ENCODE measurements at regions of chr15 and their contacts with region 1.

Region 1: GRCh38 chr15:89429023-89429422 is 67.4 kb downstream of the RHCG start:
- DNase-seq: no peak
- ATAC-seq: no peak
- H3K4me3 ChIP-seq: no peak overlapping the region
- H3K27ac ChIP-seq: no peak overlapping the region
- H3K4me1 ChIP-seq: peaks cover 0 to 6% (median 6%) of the 10 kb centered on the region in 3 donors
- H3K27me3 ChIP-seq: no peaks in the 10 kb centered on the region
- CTCF ChIP-seq: no peak

Region 2: DNA sequence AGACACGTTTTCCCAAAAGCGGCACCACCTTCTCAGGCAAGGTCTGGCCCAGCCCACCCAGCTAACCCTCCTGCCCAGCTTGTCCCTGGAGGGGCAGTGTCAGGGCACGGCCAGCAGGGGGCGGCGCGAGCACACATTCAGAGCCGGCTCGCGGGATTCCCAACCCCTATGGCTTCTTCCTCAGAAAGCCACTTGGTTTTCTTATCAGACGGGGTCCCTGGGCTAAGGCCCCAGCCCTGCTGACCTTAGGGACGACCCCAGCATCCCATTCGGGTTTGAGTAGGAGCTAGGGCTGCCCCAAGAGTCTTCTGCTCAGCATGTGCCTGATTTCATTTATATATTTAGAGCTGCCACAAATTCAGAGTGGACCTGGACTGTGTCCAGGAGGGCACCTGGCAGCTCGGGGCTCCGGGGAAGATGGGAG is 222.1 kb before region 1 on chr15:
- intact Hi-C with region 1: loop called in 1 of 3 experiments (anchors 10 kb)
- DNase-seq: peak; percentile 51 to 90 (median 78)
- ATAC-seq: peak; percentile 61 to 92 (median 90)
- H3K4me3 ChIP-seq: peak overlapping the region in 2 of 4 donors; percentile 18 to 37
- H3K27ac ChIP-seq: no peak overlapping the region
- H3K4me1 ChIP-seq: peaks cover 0 to 5% (median 5%) of the 10 kb centered on the region in 3 donors
- H3K27me3 ChIP-seq: no peaks in the 10 kb centered on the region
- CTCF ChIP-seq: peak; percentile 95 to 99 (median 96)

Region 3: DNA sequence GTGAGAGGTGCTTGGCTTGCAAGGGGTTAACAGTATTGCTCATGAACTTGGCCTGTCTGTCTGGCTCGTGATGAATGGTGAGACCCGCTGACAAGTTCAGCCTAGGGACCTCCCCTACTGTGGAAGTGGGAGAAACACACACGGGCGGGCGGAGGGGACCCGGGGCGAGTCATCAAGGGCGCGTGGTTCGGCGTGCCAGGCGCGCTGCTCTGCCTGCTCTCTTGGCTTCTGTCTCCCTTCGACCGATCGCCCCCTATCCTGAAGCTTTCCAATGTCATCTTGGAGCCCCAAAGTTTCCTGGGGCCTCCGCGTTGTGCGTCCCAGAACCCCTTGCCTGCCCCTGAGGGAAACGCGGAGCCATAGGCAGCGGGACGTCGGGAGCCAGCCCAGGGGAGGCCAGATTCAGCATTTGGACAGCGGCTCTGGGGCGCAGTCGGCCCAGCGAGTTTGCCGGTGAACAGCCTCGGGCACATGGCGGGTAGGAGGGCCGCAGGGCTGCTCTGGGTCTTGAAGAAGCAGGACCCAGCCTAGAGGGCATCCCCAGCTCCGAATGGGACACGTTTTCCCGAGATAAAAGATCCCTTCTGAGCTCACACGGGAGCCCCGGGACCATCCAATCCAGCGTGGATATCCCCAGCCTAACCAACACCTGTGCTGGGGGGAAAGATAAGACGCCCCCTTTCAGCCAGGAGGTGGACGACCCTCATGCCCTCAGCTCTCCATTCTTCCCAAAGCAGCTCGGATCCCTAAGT is 67.4 kb before region 1 on chr15:
- intact Hi-C with region 1: loop called in 2 of 3 experiments (anchors 5 kb)
- DNase-seq: peak; percentile 64 to 94 (median 83)
- ATAC-seq: peak; percentile 64 to 77 (median 72)
- H3K4me3 ChIP-seq: peak overlapping the region in 1 of 4 donors; percentile 28
- H3K27ac ChIP-seq: no peak overlapping the region
- H3K4me1 ChIP-seq: peaks cover 5 to 12% (median 9%) of the 10 kb centered on the region in 3 donors
- H3K27me3 ChIP-seq: peaks cover 0 to 74% (median 22%) of the 10 kb centered on the region in 4 donors
- CTCF ChIP-seq: no peak

Measured in pancreas (tissue), 10 donors.